KBM-7 (cell line): ENCODE measurements at regions of chr16 and their contacts with region 1.

Region 1: GRCh38 chr16:85986931-85987749 is 88.2 kb downstream of the IRF8 start:
- DNase-seq: no peak

Region 2: DNA sequence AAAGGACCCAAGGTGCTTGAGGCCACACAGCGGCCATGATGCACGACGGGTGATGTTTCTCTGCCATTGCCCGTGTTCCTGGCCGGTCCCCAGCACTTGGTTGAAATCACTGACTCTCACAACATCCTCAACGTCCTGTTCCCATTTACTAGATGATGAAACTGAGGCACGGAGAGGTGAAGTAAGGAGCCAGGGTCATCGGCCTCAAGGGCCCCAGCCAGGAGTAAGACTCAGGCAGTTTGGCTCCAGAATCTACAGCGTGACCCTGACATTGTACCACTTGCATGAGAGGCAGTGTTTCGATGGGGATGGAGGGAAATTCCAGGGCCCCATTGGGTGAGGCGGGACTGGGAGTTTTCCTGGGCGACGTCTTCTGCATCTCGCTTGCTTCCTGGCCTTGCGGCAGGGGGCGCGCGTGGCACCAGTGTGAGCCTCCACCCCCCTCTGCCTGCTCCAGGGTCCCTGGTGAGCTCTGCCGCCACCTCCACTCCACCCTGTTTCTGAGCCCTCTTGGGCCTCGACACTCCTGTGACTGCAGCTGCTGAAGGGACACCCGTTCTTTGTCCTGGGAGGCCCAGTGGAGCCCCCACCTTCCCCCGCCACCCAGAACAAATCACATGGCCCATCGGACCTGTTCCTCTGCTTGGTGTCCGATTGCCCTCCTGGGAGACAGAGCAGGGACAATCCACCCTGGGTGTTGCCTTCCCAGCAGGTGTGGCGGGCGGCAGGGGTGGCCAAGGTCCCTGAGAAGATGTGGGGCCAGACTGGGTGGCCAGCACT is 507.0 kb before region 1 on chr16:
- in situ Hi-C with region 1: no loop called
- DNase-seq: peak; percentile 66

Region 3: DNA sequence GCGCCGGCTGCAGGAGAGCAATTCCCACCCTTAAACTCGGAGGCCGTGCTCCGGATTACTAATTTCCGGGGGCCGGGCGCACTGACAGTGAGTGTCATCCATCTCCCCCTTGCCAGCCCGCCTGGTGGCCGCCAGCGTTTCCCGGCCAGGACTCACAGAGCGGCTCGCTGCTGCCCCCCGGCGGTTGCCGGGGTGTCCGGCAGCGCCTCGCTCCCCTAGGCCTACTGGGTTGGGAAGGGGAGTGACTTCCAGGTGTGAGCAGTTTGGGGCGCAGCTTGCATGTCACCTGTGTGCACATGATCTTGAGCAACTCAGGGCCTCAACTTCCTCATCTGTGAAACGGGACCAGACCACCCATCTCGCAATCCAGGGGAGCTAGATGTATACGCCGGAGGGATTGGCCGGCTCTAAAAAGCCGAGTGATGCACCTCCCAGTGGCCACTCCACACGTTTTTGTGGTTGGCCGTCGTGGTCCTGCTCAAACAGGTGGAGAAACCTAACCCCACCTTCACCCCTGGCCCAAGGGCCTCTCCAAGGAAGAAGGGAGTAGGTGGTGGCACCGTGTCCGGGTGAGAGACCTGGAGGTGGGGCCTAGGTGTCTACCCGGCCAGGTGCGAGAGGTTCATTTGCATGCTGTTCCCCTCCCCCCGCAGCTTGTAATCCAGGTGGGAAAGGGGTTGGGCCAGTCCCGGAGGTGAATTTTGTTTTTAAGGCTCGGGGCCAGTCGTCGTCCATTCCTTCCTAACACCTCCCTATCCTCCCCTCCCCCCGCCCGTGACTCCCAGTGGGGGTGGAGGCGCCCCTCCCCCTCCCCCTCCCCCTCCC is 376.4 kb before region 1 on chr16:
- in situ Hi-C with region 1: no loop called
- DNase-seq: peak; percentile 93

Region 4: DNA sequence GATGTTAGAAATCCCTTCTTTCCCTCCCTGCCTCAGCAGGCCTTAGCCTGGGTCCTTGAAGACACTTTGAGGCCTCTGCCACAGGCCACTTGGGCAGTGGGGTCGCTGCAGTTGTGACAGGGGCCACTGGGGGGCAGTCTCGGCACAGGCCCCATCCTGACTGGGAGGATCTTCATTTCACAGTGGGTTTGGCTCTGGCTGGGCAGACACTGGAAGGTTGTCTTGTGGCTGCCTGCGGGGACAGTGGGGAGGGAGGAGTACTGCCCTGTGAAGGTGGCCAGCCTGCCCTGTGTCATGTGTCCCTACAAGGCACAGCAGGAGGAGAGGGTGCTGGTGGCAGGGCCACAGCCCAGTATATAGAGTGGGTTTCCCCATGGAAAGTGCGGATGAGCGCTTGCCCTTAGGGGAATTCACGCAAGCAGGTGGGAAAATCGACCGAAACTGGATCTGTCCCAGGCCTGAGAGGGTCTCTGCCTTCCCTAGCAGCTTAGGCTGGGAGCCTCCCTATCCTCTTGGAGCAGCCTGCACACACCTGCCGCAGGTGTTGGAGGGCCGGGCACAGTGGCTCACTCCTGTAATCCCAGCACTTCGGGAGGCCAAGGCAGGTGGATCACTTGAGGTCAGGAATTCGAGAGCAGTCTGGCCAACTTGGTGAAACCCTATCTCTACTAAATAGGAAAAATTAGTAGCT is 327.2 kb before region 1 on chr16:
- in situ Hi-C with region 1: loop called (anchors 25 kb)
- DNase-seq: peak; percentile 81

Region 5: GRCh38 chr16:85821441-85822135 is 165.6 kb before region 1 on chr16:
- in situ Hi-C with region 1: loop called (anchors 10 kb)
- DNase-seq: peak; percentile 81